Panc1 (cell line): ENCODE measurements at regions of chr10 and their contacts with region 1.

Region 1: GRCh38 chr10:69439813-69440506 is 11.3 kb upstream of the TSPAN15 start:
- DNase-seq: no peak
- ATAC-seq: no peak
- H3K4me3 ChIP-seq: no peak overlapping the region
- H3K27ac ChIP-seq: peak overlapping the region; percentile 94
- H3K4me1 ChIP-seq: peaks cover 35% of the 10 kb centered on the region
- H3K27me3 ChIP-seq: no peaks in the 10 kb centered on the region
- CTCF ChIP-seq: no peak

Region 2: DNA sequence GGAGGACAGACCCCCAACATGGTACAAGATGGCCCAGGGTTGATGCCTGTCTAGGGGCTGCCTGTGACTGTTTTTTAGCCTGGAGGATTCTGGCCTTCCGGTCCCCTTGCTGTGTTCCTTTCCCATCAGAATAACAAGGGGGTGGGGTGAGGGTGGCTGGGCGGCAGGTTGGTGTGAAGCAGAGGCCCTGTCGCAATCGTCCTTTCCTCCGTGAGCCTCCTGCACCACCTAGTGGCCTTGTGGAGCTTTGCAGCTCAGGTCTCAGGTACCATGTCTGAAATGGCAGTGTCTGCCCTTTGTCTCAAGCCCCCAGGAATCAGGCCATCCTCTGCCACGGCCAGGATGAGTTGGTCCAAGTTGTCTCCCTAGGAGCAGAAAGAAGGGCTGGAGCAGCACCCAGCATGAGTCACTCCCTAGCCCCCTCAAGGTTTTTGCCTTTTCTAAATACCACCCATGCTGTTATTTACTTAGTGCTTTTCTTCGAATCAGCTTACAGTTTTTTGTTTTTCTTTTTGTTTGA is 47.4 kb before region 1 on chr10:
- CTCF ChIA-PET with region 1: interaction called, 15 read pairs
- POLR2A ChIA-PET with region 1: no interaction called
- in situ Hi-C with region 1: no loop called
- intact Hi-C with region 1: no loop called
- DNase-seq: peak; percentile 84
- ATAC-seq: peak; percentile 97
- H3K4me3 ChIP-seq: no peak overlapping the region
- H3K27ac ChIP-seq: no peak overlapping the region
- H3K4me1 ChIP-seq: no peaks in the 10 kb centered on the region
- H3K27me3 ChIP-seq: no peaks in the 10 kb centered on the region
- CTCF ChIP-seq: peak; percentile 99

Region 3: GRCh38 chr10:69455006-69455763 is 15.2 kb after region 1 on chr10:
- CTCF ChIA-PET with region 1: interaction called, 3 read pairs
- POLR2A ChIA-PET with region 1: interaction called, 10 read pairs
- in situ Hi-C with region 1: no loop called
- intact Hi-C with region 1: no loop called
- DNase-seq: no peak
- ATAC-seq: no peak
- H3K4me3 ChIP-seq: no peak overlapping the region
- H3K27ac ChIP-seq: peak overlapping the region; percentile 29; the same call in 1 of the 2 replicates
- H3K4me1 ChIP-seq: peaks cover 79% of the 10 kb centered on the region
- H3K27me3 ChIP-seq: no peaks in the 10 kb centered on the region
- CTCF ChIP-seq: no peak